ENCODE measurements at regions of chr17 and their contacts with region 1.

Region 1: GRCh38 chr17:47323382-47324222 is at the start of gene EFCAB13:
- DNase-seq: peak; percentile 85
- ATAC-seq: peak; percentile 85
- H3K4me3 Mint-ChIP-seq: peak within 1 kb of the TSS; percentile 98
- H3K27ac Mint-ChIP-seq: peak within 1 kb of the TSS; percentile 99
- H3K4me1 Mint-ChIP-seq: peaks cover 24% of the 10 kb centered on the region
- H3K27me3 Mint-ChIP-seq: no peaks in the 10 kb centered on the region
- CTCF ChIP-seq: no peak
- total RNA-seq, gene EFCAB13: 23.6 and 25.4 TPM in 2 replicates

Region 2: GRCh38 chr17:47009759-47010594 is 313.6 kb before region 1 on chr17:
- CTCF ChIA-PET with region 1: no interaction called
- POLR2A ChIA-PET with region 1: no interaction called
- intact Hi-C with region 1: loop called (anchors 10 kb)
- DNase-seq: no peak
- ATAC-seq: no peak
- H3K4me3 Mint-ChIP-seq: no peak overlapping the region
- H3K27ac Mint-ChIP-seq: no peak overlapping the region
- H3K4me1 Mint-ChIP-seq: peaks cover 10% of the 10 kb centered on the region
- H3K27me3 Mint-ChIP-seq: no peaks in the 10 kb centered on the region
- CTCF ChIP-seq: no peak

Region 3: DNA sequence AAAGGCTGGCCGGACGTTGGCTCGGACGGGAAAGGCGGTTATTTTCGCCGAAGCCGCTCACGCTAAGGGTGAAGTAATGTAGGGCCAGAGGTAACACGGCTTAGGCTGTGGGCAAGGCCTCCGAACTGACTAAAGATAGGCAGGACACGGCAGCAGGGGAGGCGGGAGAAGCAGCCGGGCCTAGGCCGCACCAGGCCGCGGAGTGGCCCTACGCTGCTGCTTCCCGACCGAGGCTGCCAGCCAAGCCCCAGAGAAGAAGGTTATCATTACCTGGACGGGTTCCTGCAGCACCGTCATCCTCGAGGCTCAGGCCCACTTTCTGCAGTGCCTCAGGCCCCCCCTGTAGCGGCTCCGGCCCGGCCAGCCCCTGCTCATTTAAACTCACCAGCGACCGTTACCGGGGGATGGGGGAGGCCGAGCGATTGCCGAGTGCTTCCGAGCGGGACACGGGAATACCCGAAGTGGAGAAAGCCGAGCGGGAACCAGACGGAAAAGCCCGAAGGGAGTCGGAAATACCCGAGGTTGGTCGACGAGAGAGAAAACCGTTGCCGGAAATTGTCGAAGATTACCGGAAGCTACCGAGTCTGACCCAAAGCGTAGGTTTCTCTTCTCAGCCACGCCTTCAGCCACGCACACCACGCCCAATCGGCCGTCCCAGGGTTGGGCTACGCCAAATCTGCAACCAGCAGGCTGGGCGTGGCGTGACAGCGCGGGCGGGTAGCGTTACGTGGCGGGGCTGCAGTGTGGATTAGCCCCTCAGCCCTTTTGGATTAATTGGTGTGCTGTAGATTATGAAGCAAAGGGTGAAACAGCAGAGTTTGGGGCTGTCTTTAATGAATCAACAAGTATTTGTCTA is 134.5 kb before region 1 on chr17 and contains the start of gene CDC27:
- CTCF ChIA-PET with region 1: no interaction called
- POLR2A ChIA-PET with region 1: interaction called, 16 read pairs
- intact Hi-C with region 1: loop called (anchors 1 kb)
- DNase-seq: peak; percentile 99
- ATAC-seq: peak; percentile 92
- H3K4me3 Mint-ChIP-seq: peak within 1 kb of the TSS; percentile 94
- H3K27ac Mint-ChIP-seq: peak within 1 kb of the TSS; percentile 92
- H3K4me1 Mint-ChIP-seq: peaks cover 57% of the 10 kb centered on the region
- H3K27me3 Mint-ChIP-seq: no peaks in the 10 kb centered on the region
- CTCF ChIP-seq: no peak
- total RNA-seq, gene CDC27: 72.5 and 76.5 TPM in 2 replicates

Region 4: DNA sequence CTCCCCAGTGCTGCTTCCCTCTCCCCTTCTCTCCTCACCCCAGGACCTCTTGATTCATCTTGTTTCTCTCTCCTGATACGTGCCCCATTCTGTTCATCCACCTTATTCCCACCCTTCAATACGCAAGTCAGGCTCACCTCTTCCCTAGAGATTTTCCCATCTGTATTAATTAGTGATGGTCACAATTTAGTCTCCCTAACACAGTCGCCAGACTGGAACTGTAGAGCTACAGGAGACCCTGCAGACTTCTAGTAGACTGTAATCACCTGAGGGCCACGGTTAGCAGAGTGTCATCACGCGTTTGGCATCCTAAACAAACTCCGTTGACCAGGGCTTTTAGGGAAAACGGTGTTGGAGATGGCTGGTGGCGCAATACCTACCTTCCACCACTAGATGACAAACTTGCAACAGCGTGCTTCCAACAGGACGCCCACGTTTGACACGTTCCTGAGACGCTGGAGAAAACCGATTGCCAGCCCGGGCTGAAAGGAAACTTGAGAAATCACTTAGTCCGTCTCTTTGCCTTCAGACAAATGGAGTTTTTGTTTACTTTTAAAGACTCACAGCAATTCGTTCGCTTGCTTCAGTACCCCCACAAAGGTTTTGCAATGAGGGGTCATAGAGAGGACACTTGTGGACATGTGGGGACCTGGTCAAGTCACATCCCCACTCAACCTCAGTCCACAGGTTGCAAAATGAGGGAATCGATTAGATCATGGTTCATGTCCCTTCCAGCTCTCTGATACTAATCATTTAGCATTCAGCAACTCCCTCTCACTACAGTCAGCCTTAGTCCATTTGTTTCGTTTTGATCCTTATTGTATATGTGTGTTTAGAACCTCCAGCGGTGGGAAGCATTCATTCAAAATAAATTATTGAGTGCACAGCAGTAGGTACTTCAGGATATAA is 93.8 kb before region 1 on chr17:
- CTCF ChIA-PET with region 1: interaction called, 7 read pairs
- POLR2A ChIA-PET with region 1: interaction called, 27 read pairs
- intact Hi-C with region 1: no loop called
- DNase-seq: peak; percentile 48
- ATAC-seq: peak; percentile 95
- H3K4me3 Mint-ChIP-seq: peak overlapping the region; percentile 56
- H3K27ac Mint-ChIP-seq: no peak overlapping the region
- H3K4me1 Mint-ChIP-seq: peaks cover 26% of the 10 kb centered on the region
- H3K27me3 Mint-ChIP-seq: no peaks in the 10 kb centered on the region
- CTCF ChIP-seq: peak; percentile 83

Region 5: DNA sequence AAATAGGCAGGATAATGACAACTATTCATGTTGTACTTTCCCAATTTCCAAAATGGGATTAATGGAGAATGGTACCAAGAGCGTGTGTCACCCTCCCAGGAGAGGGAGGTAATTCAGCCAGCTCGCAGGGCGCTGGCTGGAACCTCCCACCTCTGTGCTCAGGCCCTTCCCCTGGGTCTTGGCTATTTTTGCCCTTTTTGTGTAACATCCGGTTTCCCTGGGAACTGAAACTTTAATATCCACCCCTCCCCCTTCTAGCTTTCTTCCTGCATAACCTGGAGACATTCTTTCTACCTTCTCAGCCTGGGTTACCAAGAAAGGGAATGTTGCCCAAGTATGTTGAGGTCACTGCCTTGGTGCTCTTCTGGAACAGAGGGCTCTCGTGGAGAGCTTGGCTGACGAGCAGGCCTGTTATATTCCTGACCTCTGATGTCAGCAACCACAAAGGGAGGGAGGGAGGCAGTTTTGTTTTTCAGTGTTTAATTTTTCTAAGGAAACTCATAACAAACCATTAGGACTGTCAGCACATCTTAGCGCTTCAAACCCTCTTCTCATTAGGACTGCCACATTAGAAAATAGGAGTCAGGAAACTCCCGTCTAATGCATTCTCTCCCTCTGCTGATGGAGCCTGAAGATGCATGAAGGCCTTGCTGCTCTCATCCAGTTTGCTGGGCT is 44.4 kb before region 1 on chr17:
- CTCF ChIA-PET with region 1: no interaction called
- POLR2A ChIA-PET with region 1: interaction called, 6 read pairs
- intact Hi-C with region 1: loop called (anchors 2 kb)
- DNase-seq: peak; percentile 43
- ATAC-seq: peak; percentile 94
- H3K4me3 Mint-ChIP-seq: peak overlapping the region; percentile 78
- H3K27ac Mint-ChIP-seq: peak overlapping the region; percentile 80
- H3K4me1 Mint-ChIP-seq: peaks cover 72% of the 10 kb centered on the region
- H3K27me3 Mint-ChIP-seq: no peaks in the 10 kb centered on the region
- CTCF ChIP-seq: no peak

Region 6: DNA sequence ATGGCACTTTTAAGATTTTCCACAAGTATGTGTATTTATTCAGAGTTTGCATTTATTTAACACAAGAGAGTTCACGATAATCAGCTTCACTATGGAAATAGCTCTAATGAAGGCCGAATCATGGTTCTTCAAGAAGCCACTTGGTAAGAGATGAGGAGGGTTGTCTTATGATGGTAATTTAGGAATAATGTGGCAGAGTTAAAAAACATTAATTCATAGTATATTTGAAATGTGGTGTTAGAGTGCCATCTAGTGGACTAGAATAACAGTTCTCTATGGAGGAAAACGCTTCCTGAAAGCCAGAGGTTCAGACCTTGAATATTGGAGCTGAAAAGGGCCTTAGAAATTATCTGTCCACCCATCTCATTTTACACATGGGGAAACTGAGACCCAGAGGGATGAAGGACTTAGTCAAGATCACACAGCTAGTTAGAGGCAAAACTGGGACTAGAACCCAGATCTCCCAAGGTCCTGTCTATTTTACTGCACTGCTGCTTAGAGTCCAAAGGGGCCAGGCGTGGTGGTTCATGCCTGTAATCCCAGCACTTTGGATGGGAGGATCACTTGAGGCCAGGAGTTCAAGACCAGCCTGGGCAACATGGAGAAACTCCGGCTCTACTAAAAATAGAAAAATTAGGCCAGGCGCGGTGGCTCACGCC is 292.3 kb after region 1 on chr17:
- CTCF ChIA-PET with region 1: interaction called, 5 read pairs
- POLR2A ChIA-PET with region 1: interaction called, 5 read pairs
- intact Hi-C with region 1: loop called (anchors 2 kb)
- DNase-seq: no peak
- ATAC-seq: peak; percentile 47
- H3K4me3 Mint-ChIP-seq: no peak overlapping the region
- H3K27ac Mint-ChIP-seq: no peak overlapping the region
- H3K4me1 Mint-ChIP-seq: no peaks in the 10 kb centered on the region
- H3K27me3 Mint-ChIP-seq: no peaks in the 10 kb centered on the region
- CTCF ChIP-seq: peak; percentile 60